Esophagus muscularis mucosa (tissue), 4 donors: ENCODE measurements at regions of chrX and their contacts with region 1.

Region 1: DNA sequence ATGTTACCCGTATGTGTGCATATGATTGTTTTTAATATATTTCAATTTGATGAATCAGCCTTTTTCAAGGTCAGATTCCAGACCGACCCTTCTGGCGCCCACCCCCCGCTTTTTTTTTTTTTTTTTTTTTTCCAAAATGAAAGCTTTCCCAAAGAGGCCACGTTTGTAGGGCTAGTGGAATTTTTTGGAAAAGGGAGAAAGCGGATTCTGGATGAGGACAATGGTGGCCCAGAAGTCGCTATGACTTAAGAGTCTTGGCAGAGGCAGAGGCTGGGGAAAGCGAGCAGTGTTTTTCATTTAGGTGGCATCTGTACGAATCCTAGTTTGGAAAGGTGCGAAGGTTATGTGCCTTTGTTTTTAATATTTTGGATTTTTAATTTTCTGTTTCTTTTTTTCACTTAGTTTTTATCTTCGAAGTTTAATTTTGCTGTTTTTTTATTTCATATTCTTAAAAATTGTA is 14.6 kb downstream of the NDUFB11 start:
- DNase-seq: no peak
- H3K4me3 ChIP-seq: peak overlapping the region; percentile 54 to 61 (median 60)
- H3K27ac ChIP-seq: peak overlapping the region; percentile 80 to 86 (median 83)
- H3K4me1 ChIP-seq: peaks cover 2 to 9% (median 7%) of the 10 kb centered on the region in 4 donors
- H3K27me3 ChIP-seq: no peaks in the 10 kb centered on the region
- CTCF ChIP-seq: no peak
- EP300 ChIP-seq: no peak
- POLR2A ChIP-seq: no peak

Region 2: GRCh38 chrX:46803140-46803539 is 326.8 kb before region 1 on chrX:
- intact Hi-C with region 1: no loop called
- DNase-seq: no peak
- H3K4me3 ChIP-seq: no peak overlapping the region
- H3K27ac ChIP-seq: no peak overlapping the region
- H3K4me1 ChIP-seq: no peaks in the 10 kb centered on the region
- H3K27me3 ChIP-seq: no peaks in the 10 kb centered on the region
- CTCF ChIP-seq: no peak
- EP300 ChIP-seq: no peak
- POLR2A ChIP-seq: no peak

Region 3: DNA sequence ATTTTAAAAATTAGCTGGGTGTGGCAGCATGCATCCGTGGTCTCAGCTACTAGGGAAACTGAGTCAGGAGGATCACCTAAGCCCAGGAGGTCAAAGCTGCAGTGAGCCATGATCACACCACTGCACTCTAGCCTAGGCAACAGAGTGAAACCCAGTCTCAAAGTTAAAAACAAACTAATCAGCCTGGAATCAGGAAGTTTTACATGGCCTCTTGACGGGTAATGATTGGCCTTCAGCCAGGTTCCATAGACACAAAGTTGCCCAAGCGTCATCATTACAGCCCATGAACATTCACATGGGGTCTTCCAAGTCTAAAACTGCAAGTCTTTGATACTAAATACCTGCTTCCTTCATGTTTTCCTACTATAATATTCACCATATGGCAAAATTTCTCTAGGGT is 61.7 kb before region 1 on chrX:
- intact Hi-C with region 1: no loop called
- DNase-seq: no peak
- H3K4me3 ChIP-seq: no peak overlapping the region
- H3K27ac ChIP-seq: no peak overlapping the region
- H3K4me1 ChIP-seq: no peaks in the 10 kb centered on the region
- H3K27me3 ChIP-seq: no peaks in the 10 kb centered on the region
- CTCF ChIP-seq: no peak
- EP300 ChIP-seq: no peak
- POLR2A ChIP-seq: no peak

Region 4: DNA sequence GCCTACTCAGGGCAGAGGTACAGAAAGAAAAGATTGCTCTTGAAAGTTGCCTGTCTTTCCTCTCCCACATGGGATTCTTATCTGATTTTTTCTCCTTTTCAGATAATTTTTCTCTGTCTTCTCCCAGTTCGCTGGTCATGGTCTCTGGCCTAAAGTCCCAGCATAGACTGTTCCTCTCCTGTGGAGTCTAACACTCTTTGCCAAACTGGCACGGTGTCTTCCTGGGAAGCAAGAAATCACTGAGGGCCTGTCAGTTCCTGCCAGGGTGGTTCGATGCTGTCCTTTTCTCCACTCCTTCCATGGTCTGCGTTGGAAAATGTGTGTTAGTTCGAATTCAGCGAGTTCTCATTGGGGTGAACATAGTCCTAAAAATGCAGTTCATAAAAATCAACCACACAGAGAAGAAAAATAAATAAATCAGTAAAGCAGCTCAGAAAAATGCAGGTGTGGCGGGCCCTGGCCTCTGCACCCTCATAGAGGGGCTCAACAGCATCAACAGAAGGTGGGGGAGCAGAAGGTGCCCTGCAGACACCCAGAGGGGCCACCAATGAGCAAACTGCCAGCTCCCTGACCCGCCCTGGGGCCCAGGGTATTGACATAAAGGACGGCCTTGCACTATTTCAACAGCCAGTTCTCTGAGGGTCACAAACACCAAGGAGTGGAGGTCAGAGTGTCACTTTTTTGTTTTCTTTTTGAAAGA is 49.6 kb before region 1 on chrX:
- intact Hi-C with region 1: loop called (anchors 5 kb)
- DNase-seq: no peak
- H3K4me3 ChIP-seq: no peak overlapping the region
- H3K27ac ChIP-seq: no peak overlapping the region
- H3K4me1 ChIP-seq: peaks cover 0 to 10% (median 0%) of the 10 kb centered on the region in 4 donors
- H3K27me3 ChIP-seq: no peaks in the 10 kb centered on the region
- CTCF ChIP-seq: no peak
- EP300 ChIP-seq: no peak
- POLR2A ChIP-seq: no peak